ENCODE measurements at regions of chr17 and their contacts with region 1.

Region 1: GRCh38 chr17:49997791-49998703 is 3.0 kb upstream of the DLX3 start:
- DNase-seq: peak; percentile 76 to 95
- ATAC-seq: peak; percentile 87 to 89 (median 88)
- H3K4me3 ChIP-seq: no peak overlapping the region
- H3K4me3 Mint-ChIP-seq: no peak overlapping the region
- H3K27ac ChIP-seq: no peak overlapping the region
- H3K27ac Mint-ChIP-seq: no peak overlapping the region
- H3K4me1 ChIP-seq: peaks cover 36% of the 10 kb centered on the region
- H3K4me1 Mint-ChIP-seq: peaks cover 17 to 31% of the 10 kb centered on the region in 2 donors
- H3K27me3 ChIP-seq: peaks cover 51% of the 10 kb centered on the region
- H3K27me3 Mint-ChIP-seq: peaks cover 54 to 56% of the 10 kb centered on the region in 2 donors
- CTCF ChIP-seq: peak; percentile 92

Region 2: GRCh38 chr17:49567871-49568694 is 430.0 kb before region 1 on chr17:
- intact Hi-C with region 1: loop called (anchors 1 kb)
- DNase-seq: peak; percentile 85
- ATAC-seq: peak; percentile 66 to 69 (median 68)
- H3K4me3 ChIP-seq: no peak overlapping the region
- H3K4me3 Mint-ChIP-seq: peak overlapping the region; percentile 59
- H3K27ac ChIP-seq: no peak overlapping the region
- H3K27ac Mint-ChIP-seq: peak overlapping the region in 1 of 2 donors; percentile 8
- H3K4me1 ChIP-seq: peaks cover 32% of the 10 kb centered on the region
- H3K4me1 Mint-ChIP-seq: peaks cover 0 to 30% of the 10 kb centered on the region in 2 donors
- H3K27me3 ChIP-seq: no peaks in the 10 kb centered on the region
- H3K27me3 Mint-ChIP-seq: peaks cover 10 to 28% of the 10 kb centered on the region in 2 donors
- CTCF ChIP-seq: peak; percentile 97

Region 3: DNA sequence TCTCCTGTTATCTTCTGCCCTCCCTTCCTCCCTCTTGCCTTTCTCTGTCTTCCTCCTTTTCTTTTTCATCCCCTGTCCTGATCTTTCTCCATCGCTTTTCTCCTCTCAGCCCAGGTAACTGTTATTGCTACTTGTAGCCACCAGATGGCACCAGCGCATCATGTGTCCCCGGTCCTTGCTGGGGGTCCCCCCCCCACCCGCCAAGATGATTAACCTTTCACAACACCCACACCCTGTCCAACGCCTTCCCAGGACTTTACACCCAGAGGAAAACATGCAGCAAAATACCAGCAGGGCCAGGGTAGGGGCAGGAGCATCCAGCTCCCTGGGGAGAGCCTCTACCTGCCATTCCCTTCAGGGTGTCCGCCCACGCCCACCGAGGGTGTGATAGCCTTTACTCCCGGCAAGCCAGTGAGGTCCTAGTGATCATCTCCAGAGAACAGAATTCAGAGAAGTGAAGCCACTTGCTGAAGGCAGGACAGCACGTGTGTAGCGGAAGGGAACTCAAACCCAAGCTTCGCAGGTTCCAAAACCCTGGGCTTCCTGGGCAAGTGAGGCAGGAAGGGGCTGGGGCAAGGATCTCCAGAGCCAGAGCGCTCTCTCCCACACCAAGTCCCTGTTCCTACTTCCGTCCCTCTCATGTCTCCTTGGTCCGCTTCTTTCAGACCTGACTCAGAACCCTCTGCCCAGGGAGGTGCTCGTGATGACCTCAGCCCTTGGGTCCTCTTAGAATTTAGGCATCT is 136.7 kb before region 1 on chr17:
- intact Hi-C with region 1: loop called (anchors 1 kb)
- DNase-seq: peak; percentile 37 to 86
- ATAC-seq: peak in 2 of 3 donors; percentile 78 to 81
- H3K4me3 ChIP-seq: no peak overlapping the region
- H3K4me3 Mint-ChIP-seq: no peak overlapping the region
- H3K27ac ChIP-seq: no peak overlapping the region
- H3K27ac Mint-ChIP-seq: no peak overlapping the region
- H3K4me1 ChIP-seq: peaks cover 4% of the 10 kb centered on the region
- H3K4me1 Mint-ChIP-seq: no peaks in the 10 kb centered on the region
- H3K27me3 ChIP-seq: peaks cover 3% of the 10 kb centered on the region
- H3K27me3 Mint-ChIP-seq: peaks cover 0 to 11% of the 10 kb centered on the region in 2 donors
- CTCF ChIP-seq: peak; percentile 83

Region 4: GRCh38 chr17:49880291-49881053 is 117.6 kb before region 1 on chr17:
- intact Hi-C with region 1: loop called (anchors 1 kb)
- DNase-seq: peak; percentile 64 to 81
- ATAC-seq: peak; percentile 85 to 99 (median 99)
- H3K4me3 ChIP-seq: no peak overlapping the region
- H3K4me3 Mint-ChIP-seq: no peak overlapping the region
- H3K27ac ChIP-seq: no peak overlapping the region
- H3K27ac Mint-ChIP-seq: peak overlapping the region in 1 of 2 donors; percentile 47
- H3K4me1 ChIP-seq: peaks cover 10% of the 10 kb centered on the region
- H3K4me1 Mint-ChIP-seq: peaks cover 6 to 7% of the 10 kb centered on the region in 2 donors
- H3K27me3 ChIP-seq: peaks cover 17% of the 10 kb centered on the region
- H3K27me3 Mint-ChIP-seq: peaks cover 30 to 31% of the 10 kb centered on the region in 2 donors
- CTCF ChIP-seq: peak; percentile 95

Region 5: GRCh38 chr17:49952209-49952911 is 45.7 kb before region 1 on chr17:
- intact Hi-C with region 1: loop called (anchors 1 kb)
- DNase-seq: peak; percentile 70 to 86
- ATAC-seq: peak; percentile 69 to 93 (median 85)
- H3K4me3 ChIP-seq: no peak overlapping the region
- H3K4me3 Mint-ChIP-seq: no peak overlapping the region
- H3K27ac ChIP-seq: no peak overlapping the region
- H3K27ac Mint-ChIP-seq: no peak overlapping the region
- H3K4me1 ChIP-seq: no peaks in the 10 kb centered on the region
- H3K4me1 Mint-ChIP-seq: peaks cover 0 to 4% of the 10 kb centered on the region in 2 donors
- H3K27me3 ChIP-seq: no peaks in the 10 kb centered on the region
- H3K27me3 Mint-ChIP-seq: peaks cover 39 to 42% of the 10 kb centered on the region in 2 donors
- CTCF ChIP-seq: peak; percentile 81

Region 6: DNA sequence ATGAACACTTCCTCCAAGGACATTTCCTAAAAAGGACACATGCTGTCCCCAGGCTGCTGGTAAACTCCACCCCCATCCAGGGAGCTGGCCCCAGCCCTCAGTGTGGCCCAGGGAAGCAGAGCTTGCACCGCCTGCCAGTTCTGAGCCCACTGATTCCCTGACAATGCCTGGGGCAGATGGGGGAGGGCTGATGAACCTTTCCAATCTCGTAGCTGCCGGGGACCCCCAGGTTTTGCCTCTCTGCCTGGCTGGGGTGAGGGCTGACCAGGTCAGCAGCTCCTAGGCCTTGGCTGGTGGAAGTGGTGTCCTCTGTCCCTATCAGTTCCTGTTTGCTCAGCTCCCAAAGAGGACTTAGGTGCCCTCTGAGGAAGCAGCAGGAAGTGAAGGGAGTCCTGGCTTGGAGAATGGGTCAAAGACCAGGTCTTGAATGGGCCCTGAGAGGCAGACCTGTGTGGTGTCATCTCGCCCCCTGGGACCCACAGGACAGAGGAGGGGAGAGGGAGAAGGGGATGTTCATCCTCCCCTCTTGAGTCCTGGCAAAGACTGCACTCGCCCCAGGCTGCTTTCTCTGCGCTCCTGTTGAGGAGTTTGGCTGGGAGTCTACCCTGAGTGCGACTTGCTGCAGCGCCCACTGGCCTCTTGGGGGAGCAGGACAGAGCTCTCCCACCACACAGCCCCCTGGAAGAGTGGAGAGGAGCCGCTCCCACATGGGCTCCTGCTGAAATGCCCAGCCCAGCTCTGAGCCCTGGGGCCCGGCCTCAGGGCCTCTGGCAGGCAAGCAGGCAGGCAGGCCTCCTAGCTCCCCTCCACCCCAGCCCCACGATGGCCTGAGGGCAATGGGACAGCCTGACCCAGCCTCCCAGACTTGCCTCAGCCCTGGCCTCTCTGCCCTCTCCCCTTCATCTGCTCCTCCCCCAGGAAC is 113.9 kb after region 1 on chr17:
- intact Hi-C with region 1: no loop called
- DNase-seq: no peak
- ATAC-seq: no peak
- H3K4me3 ChIP-seq: no peak overlapping the region
- H3K4me3 Mint-ChIP-seq: no peak overlapping the region
- H3K27ac ChIP-seq: no peak overlapping the region
- H3K27ac Mint-ChIP-seq: no peak overlapping the region
- H3K4me1 ChIP-seq: peaks cover 5% of the 10 kb centered on the region
- H3K4me1 Mint-ChIP-seq: peaks cover 8 to 11% of the 10 kb centered on the region in 2 donors
- H3K27me3 ChIP-seq: peaks cover 7% of the 10 kb centered on the region
- H3K27me3 Mint-ChIP-seq: peaks cover 17 to 19% of the 10 kb centered on the region in 2 donors
- CTCF ChIP-seq: no peak

Region 7: DNA sequence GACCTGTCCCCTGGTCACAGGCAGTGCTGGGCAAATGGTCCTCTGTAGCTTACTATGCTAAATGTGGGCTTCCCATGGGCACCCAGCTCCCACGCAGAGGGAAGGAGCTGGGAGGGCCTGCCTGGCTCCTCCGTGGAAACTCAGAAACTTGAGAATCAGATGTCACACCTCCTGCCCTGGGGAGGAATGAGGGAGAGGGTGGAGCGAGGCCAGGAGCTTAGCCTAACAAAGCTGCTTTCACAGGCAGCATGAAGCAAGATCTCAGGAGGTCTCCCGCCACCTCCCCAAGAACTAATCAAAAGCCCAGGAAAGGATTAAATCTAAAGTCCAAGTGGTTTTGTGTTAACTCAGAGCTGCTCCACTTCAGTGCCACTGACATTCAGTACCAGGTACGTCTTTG is 314.3 kb after region 1 on chr17:
- intact Hi-C with region 1: no loop called
- DNase-seq: no peak
- ATAC-seq: no peak
- H3K4me3 ChIP-seq: no peak overlapping the region
- H3K4me3 Mint-ChIP-seq: no peak overlapping the region
- H3K27ac ChIP-seq: no peak overlapping the region
- H3K27ac Mint-ChIP-seq: no peak overlapping the region
- H3K4me1 ChIP-seq: no peaks in the 10 kb centered on the region
- H3K4me1 Mint-ChIP-seq: no peaks in the 10 kb centered on the region
- H3K27me3 ChIP-seq: no peaks in the 10 kb centered on the region
- H3K27me3 Mint-ChIP-seq: peaks cover 10 to 28% of the 10 kb centered on the region in 2 donors
- CTCF ChIP-seq: no peak

Measured in natural killer cell (primary cell).